Adrenal gland (tissue), 19 donors: ENCODE measurements at regions of chr11 and their contacts with region 1.

Region 1: DNA sequence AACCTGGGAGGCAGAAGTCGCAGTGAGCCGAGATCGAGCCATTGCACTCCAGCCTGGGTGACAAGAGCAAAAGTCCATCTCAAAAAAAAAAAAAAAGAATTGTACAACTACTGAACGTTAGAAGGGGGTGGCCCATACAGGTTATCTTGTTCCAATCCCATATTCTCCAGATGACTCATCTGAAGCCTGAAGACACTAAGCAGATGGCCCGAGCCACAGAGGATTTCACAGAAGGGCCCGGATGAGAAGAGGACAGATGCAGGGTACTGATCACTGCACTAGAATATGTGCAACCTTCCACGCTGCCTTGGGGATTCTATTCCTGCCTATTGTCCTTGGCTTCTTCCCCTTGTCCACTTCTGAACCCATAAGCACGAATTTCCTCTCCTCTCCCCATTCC is 70.9 kb upstream of the UBASH3B start:
- DNase-seq: no peak
- H3K4me3 ChIP-seq: no peak overlapping the region
- H3K27ac ChIP-seq: no peak overlapping the region
- H3K4me1 ChIP-seq: peaks cover 0 to 4% of the 10 kb centered on the region in 2 donors
- H3K27me3 ChIP-seq: no peaks in the 10 kb centered on the region
- CTCF ChIP-seq: no peak
- POLR2A ChIP-seq: no peak

Region 2: DNA sequence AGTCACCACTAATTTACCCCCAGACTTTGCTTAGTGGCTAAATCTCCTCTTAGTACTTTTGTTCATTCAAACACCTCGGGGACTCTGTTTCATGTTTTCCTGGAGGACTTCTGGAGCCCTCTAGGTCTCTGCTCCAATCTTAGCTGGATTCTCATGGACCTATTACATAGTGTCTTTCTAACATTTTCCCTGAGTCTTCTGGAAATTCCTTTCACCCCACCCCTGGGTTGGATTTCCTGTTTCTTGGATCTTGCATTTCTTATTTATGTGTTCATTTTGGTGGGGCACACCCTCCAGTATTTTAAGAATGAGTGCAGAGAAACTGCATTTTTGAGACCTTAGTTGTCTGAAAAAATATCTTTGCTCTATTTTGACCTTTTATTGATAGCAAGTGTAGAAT is 688.8 kb before region 1 on chr11:
- intact Hi-C with region 1: no loop called
- DNase-seq: no peak
- H3K4me3 ChIP-seq: no peak overlapping the region
- H3K27ac ChIP-seq: no peak overlapping the region
- H3K4me1 ChIP-seq: peaks cover 0 to 10% of the 10 kb centered on the region in 2 donors
- H3K27me3 ChIP-seq: no peaks in the 10 kb centered on the region
- CTCF ChIP-seq: no peak
- POLR2A ChIP-seq: no peak

Region 3: GRCh38 chr11:122628810-122629555 is 44.3 kb after region 1 on chr11:
- intact Hi-C with region 1: loop called in 1 of 2 experiments (anchors 5 kb)
- DNase-seq: peak; percentile 64 to 88 (median 73)
- H3K4me3 ChIP-seq: no peak overlapping the region
- H3K27ac ChIP-seq: no peak overlapping the region
- H3K4me1 ChIP-seq: no peaks in the 10 kb centered on the region
- H3K27me3 ChIP-seq: peaks cover 4% of the 10 kb centered on the region
- CTCF ChIP-seq: peak; percentile 65 to 91 (median 82)
- POLR2A ChIP-seq: no peak